Esophagus squamous epithelium (tissue), 5 donors: ENCODE measurements at regions of chr6 and their contacts with region 1.

Region 1: DNA sequence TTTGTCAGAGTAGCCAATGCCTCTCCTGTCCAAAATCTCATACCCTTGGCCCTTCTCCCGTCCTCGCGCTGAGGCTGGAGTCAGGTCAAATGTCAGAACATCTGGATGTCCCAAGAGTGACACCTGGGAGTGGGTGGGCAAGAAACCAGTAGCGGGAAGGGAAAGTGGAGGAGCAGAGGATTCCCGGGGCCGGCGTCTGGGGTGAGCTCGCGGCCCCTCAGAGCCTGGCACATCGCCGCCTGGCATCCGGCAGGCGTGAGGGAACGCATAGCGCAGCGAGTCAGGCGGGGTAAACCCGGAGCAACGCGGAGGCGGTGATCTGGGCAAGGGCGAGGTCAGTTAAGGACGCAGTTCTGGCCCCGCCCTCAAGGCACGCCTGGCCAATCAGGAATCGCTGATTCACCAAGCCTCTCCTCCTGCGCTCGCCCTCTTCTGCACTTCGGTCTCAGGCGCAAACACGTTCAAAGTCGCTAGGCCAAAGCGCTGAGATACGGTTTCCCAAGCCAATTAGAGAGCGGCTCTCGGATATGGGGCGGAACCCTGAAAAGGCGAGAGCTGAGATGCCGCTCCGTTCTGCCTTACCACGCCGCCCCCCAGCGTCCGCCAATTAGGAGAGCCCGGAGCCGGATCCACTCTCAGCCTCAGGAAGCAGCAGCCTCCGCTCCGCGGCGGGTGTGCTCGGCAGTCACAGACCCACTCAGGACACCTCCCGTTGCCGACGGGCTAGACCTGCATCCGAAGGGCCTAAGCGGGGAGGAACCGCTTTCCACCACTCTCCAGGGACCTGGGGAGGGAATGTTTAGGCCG is 22.5 kb downstream of the VPS52 start:
- DNase-seq: peak; percentile 88
- H3K4me3 ChIP-seq: peak overlapping the region; percentile 38 to 74 (median 64)
- H3K27ac ChIP-seq: peak overlapping the region; percentile 92 to 99 (median 98)
- H3K4me1 ChIP-seq: peaks cover 13 to 32% (median 23%) of the 10 kb centered on the region in 3 donors
- H3K27me3 ChIP-seq: peaks cover 0 to 3% (median 0%) of the 10 kb centered on the region in 4 donors
- CTCF ChIP-seq: peak in 2 of 6 experiments; percentile 7 to 20
- POLR2A ChIP-seq: peak in 2 of 4 donors; percentile 79 to 85

Region 2: GRCh38 chr6:33123732-33124524 is 125.2 kb before region 1 on chr6:
- intact Hi-C with region 1: loop called (anchors 5 kb)
- DNase-seq: no peak
- H3K4me3 ChIP-seq: no peak overlapping the region
- H3K27ac ChIP-seq: no peak overlapping the region
- H3K4me1 ChIP-seq: no peaks in the 10 kb centered on the region
- H3K27me3 ChIP-seq: peaks cover 0 to 14% (median 2%) of the 10 kb centered on the region in 4 donors
- CTCF ChIP-seq: peak in 5 of 6 experiments; percentile 22 to 61 (median 46)
- POLR2A ChIP-seq: no peak

Region 3: GRCh38 chr6:33161354-33162331 is 87.5 kb before region 1 on chr6:
- intact Hi-C with region 1: loop called (anchors 5 kb)
- DNase-seq: no peak
- H3K4me3 ChIP-seq: peak overlapping the region; percentile 40 to 68 (median 56)
- H3K27ac ChIP-seq: peak overlapping the region; percentile 74 to 78 (median 78)
- H3K4me1 ChIP-seq: peaks cover 8 to 22% (median 13%) of the 10 kb centered on the region in 3 donors
- H3K27me3 ChIP-seq: no peaks in the 10 kb centered on the region
- CTCF ChIP-seq: peak; percentile 89 to 95 (median 93)
- POLR2A ChIP-seq: no peak